ENCODE measurements at regions of chr4 and their contacts with region 1.

Region 1: DNA sequence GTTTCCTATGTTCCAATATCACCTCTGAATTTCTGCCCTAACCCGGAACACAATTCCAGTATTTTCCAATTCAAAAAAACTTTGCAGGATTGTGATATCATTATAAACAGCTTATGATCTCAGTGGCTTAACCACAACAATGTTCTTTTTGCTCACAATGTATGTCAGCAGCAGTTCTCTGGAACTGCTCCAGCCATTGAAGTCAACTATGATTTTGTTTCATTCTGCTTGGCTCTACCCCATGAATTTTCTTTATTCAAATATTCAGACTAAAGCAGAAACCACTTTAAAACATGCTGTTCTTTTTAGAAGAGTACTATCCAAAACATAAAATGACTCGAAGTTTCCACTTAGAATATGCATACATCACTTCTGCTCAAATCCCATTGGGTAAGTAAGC is 1611.1 kb downstream of the ARAP2 start:
- DNase-seq: no peak
- H3K4me3 ChIP-seq: no peak overlapping the region
- H3K27ac ChIP-seq: no peak overlapping the region
- H3K4me1 ChIP-seq: no peaks in the 10 kb centered on the region
- H3K27me3 ChIP-seq: no peaks in the 10 kb centered on the region
- CTCF ChIP-seq: no peak
- EP300 ChIP-seq: no peak
- POLR2A ChIP-seq: no peak

Region 2: GRCh38 chr4:36235314-36235713 is 1602.1 kb after region 1 on chr4:
- in situ Hi-C with region 1: no loop called
- intact Hi-C with region 1: loop called (anchors 5 kb)
- DNase-seq: no peak
- H3K4me3 ChIP-seq: no peak overlapping the region
- H3K27ac ChIP-seq: no peak overlapping the region
- H3K4me1 ChIP-seq: peaks cover 0 to 8% (median 4%) of the 10 kb centered on the region in 4 donors
- H3K27me3 ChIP-seq: no peaks in the 10 kb centered on the region
- CTCF ChIP-seq: no peak
- EP300 ChIP-seq: no peak
- POLR2A ChIP-seq: no peak